Calu3 (cell line): ENCODE measurements at regions of chr14 and their contacts with region 1.

Region 1: DNA sequence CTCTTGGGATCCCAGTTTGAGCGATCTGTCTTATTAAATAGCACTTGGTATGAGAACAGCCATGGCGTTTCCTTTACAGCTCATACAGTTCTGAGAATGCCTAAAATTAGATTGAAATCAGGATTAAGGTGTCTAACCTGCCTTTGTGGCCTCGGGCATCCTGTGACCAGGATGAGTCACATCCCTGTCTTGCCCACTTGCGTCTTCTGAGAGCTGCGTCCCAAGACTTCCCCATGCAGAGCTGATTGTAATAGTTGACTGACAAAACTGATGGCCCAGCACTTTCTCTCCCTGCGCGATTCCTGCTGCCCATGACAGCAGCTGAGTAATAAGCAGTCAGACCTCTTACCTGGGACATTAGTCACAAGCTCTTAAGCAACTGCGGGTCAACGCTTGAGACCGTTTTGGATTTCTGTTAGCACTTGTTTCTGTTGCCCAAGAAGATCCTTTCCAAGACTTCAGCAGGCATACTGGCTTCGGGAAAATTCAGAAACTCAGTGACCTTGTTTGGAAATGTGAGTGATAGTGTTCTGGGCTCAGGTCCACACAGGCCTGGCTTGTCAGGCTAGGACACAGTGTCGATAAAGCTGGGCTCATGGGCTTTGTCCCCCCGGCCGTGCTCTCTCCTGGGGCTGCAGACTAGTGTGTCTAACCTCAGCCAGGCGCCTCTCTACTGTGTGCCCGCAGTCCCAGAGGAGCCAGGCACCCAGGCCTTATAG is 169.9 kb upstream of the HIF1A start:
- DNase-seq: peak; percentile 79
- H3K4me3 Mint-ChIP-seq: peak overlapping the region; percentile 35
- H3K27ac Mint-ChIP-seq: peak overlapping the region; percentile 88
- H3K4me1 Mint-ChIP-seq: peaks cover 75% of the 10 kb centered on the region
- H3K27me3 Mint-ChIP-seq: no peaks in the 10 kb centered on the region
- CTCF ChIP-seq: no peak

Region 2: DNA sequence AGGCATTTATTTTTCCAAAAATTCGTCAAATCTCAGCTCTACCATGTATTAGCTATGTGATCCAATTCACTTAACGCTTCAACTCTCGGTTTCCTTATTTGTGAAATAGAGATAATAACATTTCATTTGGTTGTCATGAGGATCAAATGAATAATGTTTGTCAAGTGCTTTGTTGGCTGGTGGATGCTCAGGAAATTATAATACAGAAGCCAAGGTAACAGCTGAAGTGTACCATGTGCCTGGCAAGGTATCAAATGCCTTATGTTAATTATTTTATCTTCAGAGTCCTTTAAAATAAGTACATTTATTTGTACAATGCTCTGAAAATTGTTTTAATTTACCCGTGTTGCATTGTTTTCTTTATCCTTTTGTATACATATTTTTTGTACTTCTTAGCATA is 210.1 kb before region 1 on chr14:
- CTCF ChIA-PET with region 1: no interaction called
- intact Hi-C with region 1: no loop called
- DNase-seq: no peak
- H3K4me3 Mint-ChIP-seq: no peak overlapping the region
- H3K27ac Mint-ChIP-seq: no peak overlapping the region
- H3K4me1 Mint-ChIP-seq: no peaks in the 10 kb centered on the region
- H3K27me3 Mint-ChIP-seq: no peaks in the 10 kb centered on the region
- CTCF ChIP-seq: no peak

Region 3: GRCh38 chr14:61326847-61327246 is 198.6 kb before region 1 on chr14:
- CTCF ChIA-PET with region 1: no interaction called
- intact Hi-C with region 1: no loop called
- DNase-seq: peak; percentile 66
- H3K4me3 Mint-ChIP-seq: peak overlapping the region; percentile 52
- H3K27ac Mint-ChIP-seq: peak overlapping the region; percentile 83
- H3K4me1 Mint-ChIP-seq: peaks cover 23% of the 10 kb centered on the region
- H3K27me3 Mint-ChIP-seq: no peaks in the 10 kb centered on the region
- CTCF ChIP-seq: no peak

Region 4: GRCh38 chr14:61475316-61475715 is 50.1 kb before region 1 on chr14:
- CTCF ChIA-PET with region 1: interaction called, 21 read pairs
- intact Hi-C with region 1: loop called (anchors 1 kb)
- DNase-seq: peak; percentile 41
- H3K4me3 Mint-ChIP-seq: no peak overlapping the region
- H3K27ac Mint-ChIP-seq: peak overlapping the region; percentile 61
- H3K4me1 Mint-ChIP-seq: peaks cover 86% of the 10 kb centered on the region
- H3K27me3 Mint-ChIP-seq: no peaks in the 10 kb centered on the region
- CTCF ChIP-seq: peak; percentile 70

Region 5: DNA sequence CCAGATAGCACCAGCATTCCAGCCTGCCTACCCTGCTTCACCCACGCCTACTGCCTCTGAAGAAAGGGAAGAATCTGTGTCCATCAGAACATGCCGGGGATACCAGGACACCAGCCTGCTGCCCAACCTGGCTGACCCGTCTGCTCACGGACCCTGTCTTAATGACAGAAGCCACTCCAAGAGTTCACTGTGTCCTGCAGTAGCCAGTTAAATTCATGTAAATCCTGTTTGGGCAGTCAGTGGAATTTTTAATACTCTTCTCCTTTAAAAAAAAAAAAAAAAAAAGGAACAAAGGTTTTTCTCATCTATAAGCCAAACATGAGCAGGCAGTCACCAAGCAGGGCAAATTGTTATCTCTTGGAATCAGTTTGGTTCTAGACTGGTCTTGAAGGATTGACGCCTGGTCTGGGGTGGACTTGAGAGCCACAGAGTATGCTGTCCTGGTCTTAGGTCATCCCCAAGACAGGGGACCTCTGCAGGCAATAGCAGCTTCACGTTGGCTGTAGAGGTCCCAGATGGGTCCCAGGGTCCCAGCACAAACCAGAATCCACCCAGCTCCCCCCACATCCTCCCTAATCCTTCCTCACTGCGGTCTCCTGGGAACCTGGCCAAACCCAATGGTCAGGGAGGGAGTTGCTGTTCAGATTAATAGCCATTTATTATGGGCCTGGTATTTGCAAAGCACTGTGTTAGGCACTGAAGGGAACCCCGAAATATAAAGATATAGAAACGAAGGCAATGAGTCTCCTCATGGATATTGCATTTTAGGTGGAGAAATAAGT is 11.2 kb before region 1 on chr14:
- CTCF ChIA-PET with region 1: interaction called, 5 read pairs
- intact Hi-C with region 1: loop called (anchors 1 kb)
- DNase-seq: no peak
- H3K4me3 Mint-ChIP-seq: no peak overlapping the region
- H3K27ac Mint-ChIP-seq: peak overlapping the region; percentile 39
- H3K4me1 Mint-ChIP-seq: peaks cover 71% of the 10 kb centered on the region
- H3K27me3 Mint-ChIP-seq: no peaks in the 10 kb centered on the region
- CTCF ChIP-seq: no peak

Region 6: DNA sequence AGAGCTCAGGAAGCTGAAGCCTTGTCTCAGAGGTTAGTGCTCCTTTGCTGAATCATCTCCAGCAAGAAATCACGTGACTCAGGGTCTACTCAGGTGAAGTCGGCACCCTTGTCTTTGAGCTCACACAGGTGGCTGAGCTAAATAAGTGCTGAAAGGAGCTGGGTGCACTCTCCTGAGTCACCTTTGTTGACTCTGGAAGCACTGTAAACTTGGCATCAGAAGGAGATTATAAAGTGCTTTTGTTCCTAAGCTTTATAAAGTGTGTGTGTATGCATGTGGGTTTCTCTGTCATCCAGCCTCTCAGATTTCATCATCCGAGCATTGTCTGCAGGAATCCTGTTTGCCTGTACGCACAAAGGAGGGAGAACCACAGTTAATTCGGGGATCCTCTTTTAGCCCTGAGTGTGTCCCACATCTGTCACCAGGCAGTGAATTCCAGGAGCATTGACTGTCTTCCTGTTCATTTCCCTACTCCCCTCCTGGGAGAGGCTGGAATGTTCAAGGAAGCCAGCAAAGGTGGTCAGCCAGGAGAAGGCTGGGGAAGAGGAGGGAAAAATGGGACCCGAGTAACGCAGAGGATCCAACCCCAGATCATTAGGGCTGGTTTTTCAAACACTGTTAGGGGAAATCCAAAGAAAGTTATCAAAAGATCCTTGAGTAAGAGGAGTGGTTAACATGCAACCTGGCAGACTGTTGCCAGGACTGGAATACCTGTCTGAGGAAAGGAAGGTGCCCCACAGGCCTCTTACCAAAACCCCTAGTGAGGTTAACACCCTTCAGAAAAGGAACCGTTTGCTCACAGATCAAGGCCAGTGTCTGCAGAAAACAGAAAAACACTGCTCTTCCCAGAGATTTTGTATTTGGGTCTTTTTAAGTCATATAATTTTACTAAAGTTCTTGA is 12.4 kb after region 1 on chr14:
- CTCF ChIA-PET with region 1: interaction called, 7 read pairs
- intact Hi-C with region 1: loop called (anchors 1 kb)
- DNase-seq: peak; percentile 76
- H3K4me3 Mint-ChIP-seq: peak overlapping the region; percentile 20
- H3K27ac Mint-ChIP-seq: peak overlapping the region; percentile 85
- H3K4me1 Mint-ChIP-seq: peaks cover 64% of the 10 kb centered on the region
- H3K27me3 Mint-ChIP-seq: no peaks in the 10 kb centered on the region
- CTCF ChIP-seq: no peak

Region 7: GRCh38 chr14:61553725-61554641 is 28.5 kb after region 1 on chr14:
- CTCF ChIA-PET with region 1: interaction called, 11 read pairs
- intact Hi-C with region 1: loop called (anchors 2 kb)
- DNase-seq: peak; percentile 74
- H3K4me3 Mint-ChIP-seq: peak overlapping the region; percentile 45
- H3K27ac Mint-ChIP-seq: peak overlapping the region; percentile 92
- H3K4me1 Mint-ChIP-seq: peaks cover 54% of the 10 kb centered on the region
- H3K27me3 Mint-ChIP-seq: no peaks in the 10 kb centered on the region
- CTCF ChIP-seq: no peak

Region 8: DNA sequence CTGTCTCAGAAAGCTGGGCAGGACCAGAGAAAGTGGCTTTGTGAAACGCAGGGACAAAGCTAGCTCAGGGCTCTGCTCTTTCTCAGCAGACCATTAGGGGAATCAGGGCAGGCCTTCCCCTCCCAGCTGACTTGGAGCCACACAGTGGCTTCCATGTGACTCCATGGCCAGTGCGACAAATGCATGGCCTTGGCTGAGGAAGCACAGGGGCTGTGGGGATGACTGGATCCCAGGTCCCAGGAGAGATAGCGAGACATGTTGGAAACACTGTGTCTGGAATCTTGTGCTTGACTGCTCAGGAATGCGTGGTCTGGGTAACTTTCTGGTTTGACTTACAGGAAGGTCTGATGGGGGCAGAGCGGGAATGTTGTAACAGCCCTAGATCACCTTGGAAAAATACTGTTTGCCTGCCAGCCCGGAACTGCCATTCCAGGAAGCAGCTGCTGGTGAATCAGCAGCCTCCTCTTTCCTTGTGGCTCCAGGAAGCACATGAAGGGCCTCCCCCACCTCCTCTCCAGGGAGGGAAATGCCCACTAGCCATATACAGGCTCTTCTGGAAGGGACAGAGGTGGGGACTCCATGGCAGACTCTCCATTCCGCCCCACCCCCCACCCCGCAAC is 36.3 kb after region 1 on chr14:
- CTCF ChIA-PET with region 1: interaction called, 11 read pairs
- intact Hi-C with region 1: loop called (anchors 2 kb)
- DNase-seq: peak; percentile 78
- H3K4me3 Mint-ChIP-seq: peak overlapping the region; percentile 31
- H3K27ac Mint-ChIP-seq: peak overlapping the region; percentile 99
- H3K4me1 Mint-ChIP-seq: peaks cover 73% of the 10 kb centered on the region
- H3K27me3 Mint-ChIP-seq: no peaks in the 10 kb centered on the region
- CTCF ChIP-seq: no peak

Region 9: GRCh38 chr14:61690982-61691381 is 165.5 kb after region 1 on chr14:
- CTCF ChIA-PET with region 1: no interaction called
- intact Hi-C with region 1: no loop called
- DNase-seq: no peak
- H3K4me3 Mint-ChIP-seq: no peak overlapping the region
- H3K27ac Mint-ChIP-seq: no peak overlapping the region
- H3K4me1 Mint-ChIP-seq: no peaks in the 10 kb centered on the region
- H3K27me3 Mint-ChIP-seq: no peaks in the 10 kb centered on the region
- CTCF ChIP-seq: no peak